Caco-2 (cell line): ENCODE measurements at regions of chr12 and their contacts with region 1.

Region 1: GRCh38 chr12:50084775-50085614 is at the start of gene SMARCD1:
- DNase-seq: peak; percentile 97
- H3K4me3 ChIP-seq: peak within 1 kb of the TSS; percentile 72
- H3K4me3 Mint-ChIP-seq: peak within 1 kb of the TSS; percentile 83
- H3K27ac Mint-ChIP-seq: peak within 1 kb of the TSS; percentile 79
- H3K4me1 ChIP-seq: peaks cover 44% of the 10 kb centered on the region
- H3K4me1 Mint-ChIP-seq: peaks cover 37% of the 10 kb centered on the region
- H3K27me3 ChIP-seq: no peaks in the 10 kb centered on the region
- H3K27me3 Mint-ChIP-seq: no peaks in the 10 kb centered on the region
- CTCF ChIP-seq: peak; percentile 12 to 87
- total RNA-seq, gene SMARCD1: 142 and 158 TPM in 2 replicates

Region 2: DNA sequence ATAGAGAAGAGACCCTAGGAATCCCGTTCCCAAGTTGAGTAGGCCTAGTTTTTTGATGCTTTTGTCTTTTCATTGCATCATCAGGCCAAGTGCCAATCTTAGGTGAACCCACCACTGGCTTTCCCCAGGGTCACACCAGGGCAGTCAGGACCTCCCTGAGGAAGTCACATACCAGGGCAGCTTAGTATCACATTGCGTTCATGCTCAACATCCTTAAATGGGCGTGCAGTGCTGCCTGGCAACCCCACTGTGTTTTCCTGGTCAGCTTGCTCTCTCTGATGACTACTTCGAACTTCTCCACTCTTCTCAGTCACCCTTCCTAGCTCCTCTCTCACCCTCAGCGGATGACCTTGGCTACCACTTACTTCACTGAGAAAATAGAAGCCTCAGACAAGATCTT is 18.6 kb before region 1 on chr12:
- CTCF ChIA-PET with region 1: interaction called, 29 read pairs
- POLR2A ChIA-PET with region 1: interaction called, 15 read pairs
- intact Hi-C with region 1: no loop called
- DNase-seq: peak; percentile 63 to 69
- H3K4me3 ChIP-seq: no peak overlapping the region
- H3K4me3 Mint-ChIP-seq: no peak overlapping the region
- H3K27ac Mint-ChIP-seq: no peak overlapping the region
- H3K4me1 ChIP-seq: 0 out of 2 replicates have a peak, but pooled peaks cover 8% of the 10 kb centered on the region
- H3K4me1 Mint-ChIP-seq: peaks cover 12% of the 10 kb centered on the region
- H3K27me3 ChIP-seq: no peaks in the 10 kb centered on the region
- H3K27me3 Mint-ChIP-seq: no peaks in the 10 kb centered on the region
- CTCF ChIP-seq: no peak

Region 3: DNA sequence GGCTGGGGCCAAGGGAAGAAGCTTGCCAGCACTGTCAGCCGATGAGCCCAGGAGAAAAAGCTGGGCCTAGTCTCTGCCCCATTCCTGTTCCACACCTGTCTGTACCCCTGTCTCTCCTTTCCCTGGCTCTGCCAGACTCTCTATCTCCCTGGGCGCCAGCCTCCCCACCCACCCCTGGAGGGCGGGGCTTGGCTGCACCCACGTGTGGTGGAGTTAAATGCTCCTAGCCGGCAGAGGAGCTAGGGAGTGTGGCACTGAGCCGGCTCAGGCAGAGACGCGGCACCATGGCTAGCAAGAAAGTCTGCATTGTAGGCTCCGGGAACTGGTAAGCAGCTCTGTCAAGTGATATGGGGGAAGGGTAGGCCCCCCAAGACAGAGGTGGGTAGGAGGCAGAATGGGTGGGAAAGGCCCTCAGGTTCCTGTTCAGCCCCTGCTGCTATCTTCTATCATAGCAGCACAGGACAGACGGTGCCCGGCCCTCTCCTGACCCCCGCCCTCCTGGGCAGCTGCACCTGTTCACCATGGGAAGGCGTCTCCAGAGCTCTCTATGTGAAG is 18.8 kb after region 1 on chr12 and contains the start of gene GPD1:
- CTCF ChIA-PET with region 1: interaction called, 11 read pairs
- POLR2A ChIA-PET with region 1: interaction called, 3 read pairs
- intact Hi-C with region 1: no loop called
- DNase-seq: no peak
- H3K4me3 ChIP-seq: no peak within 1 kb of the TSS
- H3K4me3 Mint-ChIP-seq: no peak within 1 kb of the TSS
- H3K27ac Mint-ChIP-seq: peak within 1 kb of the TSS; percentile 35
- H3K4me1 ChIP-seq: peaks cover 30% of the 10 kb centered on the region
- H3K4me1 Mint-ChIP-seq: peaks cover 19% of the 10 kb centered on the region
- H3K27me3 ChIP-seq: no peaks in the 10 kb centered on the region
- H3K27me3 Mint-ChIP-seq: no peaks in the 10 kb centered on the region
- CTCF ChIP-seq: no peak
- total RNA-seq, gene GPD1: 1.5 and 1.9 TPM in 2 replicates

Region 4: DNA sequence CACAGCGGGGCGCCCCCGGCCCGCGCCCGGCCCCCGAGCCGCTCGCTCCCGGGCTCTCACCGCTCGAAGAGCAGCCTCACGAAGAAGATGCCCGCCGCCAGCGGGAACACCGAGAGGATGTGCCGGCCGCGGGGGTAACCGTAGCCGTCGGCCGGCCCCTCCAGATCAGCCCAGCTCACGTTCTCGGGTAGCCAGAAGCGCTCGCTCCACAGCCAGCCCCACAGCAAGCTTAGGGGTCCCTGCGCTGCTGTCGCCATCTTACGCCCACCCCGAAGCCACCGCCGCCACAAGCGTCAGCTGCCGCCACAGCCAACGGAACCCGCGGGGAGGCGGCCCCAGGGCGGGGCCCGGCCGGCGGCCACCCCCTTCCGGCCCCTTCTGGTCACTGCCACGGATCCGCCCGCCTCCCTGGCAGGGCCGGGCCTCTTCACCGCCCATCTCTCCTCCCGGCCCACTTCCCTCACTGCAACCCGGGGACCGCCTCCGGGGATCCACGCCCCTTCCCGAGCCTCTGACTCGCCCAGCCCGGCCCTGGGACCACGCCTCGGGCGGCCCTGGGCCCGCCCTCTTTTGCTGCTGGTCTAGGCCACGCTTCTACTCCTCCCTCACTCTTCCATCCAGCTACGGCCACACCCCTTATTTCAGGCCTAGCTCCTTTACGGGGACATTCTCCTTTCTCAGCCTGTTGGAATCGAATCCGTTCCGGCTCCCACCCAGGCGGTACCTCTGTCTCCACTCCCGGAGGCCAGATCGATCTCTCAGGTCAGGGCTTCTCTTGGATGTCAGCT is 82.2 kb after region 1 on chr12 and contains the start of gene CERS5:
- CTCF ChIA-PET with region 1: interaction called, 15 read pairs
- POLR2A ChIA-PET with region 1: interaction called, 24 read pairs
- intact Hi-C with region 1: loop called (anchors 1 kb)
- DNase-seq: peak; percentile 99 to 100
- H3K4me3 ChIP-seq: peak within 1 kb of the TSS; percentile 63
- H3K4me3 Mint-ChIP-seq: peak within 1 kb of the TSS; percentile 80
- H3K27ac Mint-ChIP-seq: peak within 1 kb of the TSS; percentile 77
- H3K4me1 ChIP-seq: peaks cover 11% of the 10 kb centered on the region; the same call in 1 of the 2 replicates
- H3K4me1 Mint-ChIP-seq: peaks cover 8% of the 10 kb centered on the region
- H3K27me3 ChIP-seq: no peaks in the 10 kb centered on the region
- H3K27me3 Mint-ChIP-seq: no peaks in the 10 kb centered on the region
- CTCF ChIP-seq: peak in 1 of 2 experiments; percentile 64
- total RNA-seq, gene CERS5: 61.6 and 62.6 TPM in 2 replicates

Region 5: GRCh38 chr12:50174971-50175715 is 90.1 kb after region 1 on chr12:
- CTCF ChIA-PET with region 1: interaction called, 5 read pairs
- POLR2A ChIA-PET with region 1: no interaction called
- intact Hi-C with region 1: loop called (anchors 1 kb)
- DNase-seq: peak in 1 of 2 experiments; percentile 80
- H3K4me3 ChIP-seq: no peak overlapping the region
- H3K4me3 Mint-ChIP-seq: no peak overlapping the region
- H3K27ac Mint-ChIP-seq: no peak overlapping the region
- H3K4me1 ChIP-seq: peaks cover 6% of the 10 kb centered on the region; the same call in 1 of the 2 replicates
- H3K4me1 Mint-ChIP-seq: no peaks in the 10 kb centered on the region
- H3K27me3 ChIP-seq: no peaks in the 10 kb centered on the region
- H3K27me3 Mint-ChIP-seq: no peaks in the 10 kb centered on the region
- CTCF ChIP-seq: peak; percentile 45 to 72